ENCODE measurements at regions of chr1 and their contacts with region 1.

Region 1: DNA sequence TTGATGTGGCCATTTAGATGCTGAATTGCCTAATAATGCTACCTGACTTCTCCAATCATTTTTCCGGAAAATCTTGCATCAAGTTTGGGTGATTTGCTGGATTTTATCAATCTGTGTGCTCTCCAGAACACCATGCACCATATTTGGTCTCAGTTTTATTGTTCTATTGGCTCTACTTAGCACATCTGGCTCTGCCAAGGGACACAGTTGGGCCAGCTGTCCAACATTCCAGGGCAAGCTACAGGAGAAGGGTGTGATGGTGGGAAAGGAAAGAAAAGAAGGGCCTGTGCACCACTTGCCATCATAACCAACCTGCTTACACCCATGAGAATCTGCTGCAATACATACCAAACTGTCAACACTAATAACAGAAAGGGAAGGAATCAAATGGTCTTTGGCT is 90.2 kb upstream of the NFIA start:
- DNase-seq: no peak
- H3K4me3 ChIP-seq: no peak overlapping the region
- H3K27ac ChIP-seq: peak overlapping the region; percentile 72 to 86
- H3K4me1 ChIP-seq: peaks cover 3 to 47% of the 10 kb centered on the region in 2 donors
- H3K27me3 ChIP-seq: no peaks in the 10 kb centered on the region
- CTCF ChIP-seq: no peak

Region 2: GRCh38 chr1:60978421-60979357 is 13.5 kb before region 1 on chr1:
- intact Hi-C with region 1: loop called (anchors 2 kb)
- DNase-seq: no peak
- H3K4me3 ChIP-seq: no peak overlapping the region
- H3K27ac ChIP-seq: peak overlapping the region; percentile 45 to 78
- H3K4me1 ChIP-seq: peaks cover 0 to 27% of the 10 kb centered on the region in 2 donors
- H3K27me3 ChIP-seq: no peaks in the 10 kb centered on the region
- CTCF ChIP-seq: peak; percentile 29 to 53 (median 46)